ENCODE measurements at regions of chr16 and their contacts with region 1.

Region 1: GRCh38 chr16:88639231-88640038 is 1.1 kb downstream of the IL17C start:
- DNase-seq: no peak
- H3K4me3 Mint-ChIP-seq: no peak overlapping the region
- H3K27ac Mint-ChIP-seq: no peak overlapping the region
- H3K4me1 Mint-ChIP-seq: peaks cover 40% of the 10 kb centered on the region
- H3K27me3 Mint-ChIP-seq: peaks cover 27% of the 10 kb centered on the region

Region 2: DNA sequence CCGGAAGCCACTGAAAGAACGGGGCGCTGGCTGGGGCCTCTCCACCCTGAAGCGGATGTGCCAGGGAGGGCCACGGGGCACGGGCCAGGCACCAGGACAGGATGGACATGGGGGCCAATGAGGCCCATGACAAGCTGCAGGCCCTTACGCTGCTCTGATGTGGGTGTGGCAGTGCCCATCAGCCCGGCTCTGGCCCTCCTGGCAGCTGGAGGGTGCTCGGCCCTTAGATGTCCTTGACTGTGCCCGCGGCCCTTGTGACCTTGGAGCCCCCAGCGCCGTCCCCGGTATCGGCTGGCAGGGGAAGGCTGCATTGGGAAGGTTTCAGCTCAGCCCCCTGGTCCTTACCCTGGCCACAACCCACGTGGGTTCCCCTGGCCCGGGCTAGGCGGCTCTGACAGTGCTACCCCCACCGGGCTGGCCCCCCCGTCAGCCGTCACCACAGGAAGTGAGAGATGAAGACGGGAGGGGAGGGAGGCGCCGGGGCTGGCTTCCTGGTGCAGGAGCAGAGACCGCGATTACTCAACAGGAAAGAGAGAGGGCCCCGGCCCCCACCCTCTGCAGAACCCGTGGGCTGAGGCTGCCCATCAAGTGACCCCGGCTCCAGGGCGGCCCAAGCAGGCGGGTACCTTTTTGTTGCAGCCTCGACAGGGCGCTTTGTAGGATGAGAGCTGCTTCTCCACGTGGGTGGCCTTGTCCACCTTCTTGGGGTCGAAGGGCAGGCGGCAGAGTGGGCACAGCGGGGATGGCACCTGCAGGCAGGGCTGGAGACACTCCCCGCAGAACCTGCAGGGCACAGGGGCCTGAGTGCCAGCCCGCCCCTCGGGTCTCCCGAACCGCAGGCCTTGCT is 61.4 kb after region 1 on chr16:
- CTCF ChIA-PET with region 1: no interaction called
- intact Hi-C with region 1: loop called (anchors 5 kb)
- DNase-seq: peak; percentile 98
- H3K4me3 Mint-ChIP-seq: peak overlapping the region; percentile 84
- H3K27ac Mint-ChIP-seq: peak overlapping the region; percentile 98
- H3K4me1 Mint-ChIP-seq: peaks cover 71% of the 10 kb centered on the region
- H3K27me3 Mint-ChIP-seq: no peaks in the 10 kb centered on the region